Tibial artery (tissue), 4 donors: ENCODE measurements at regions of chr2 and their contacts with region 1.

Region 1: GRCh38 chr2:26745609-26746327 is 18.3 kb upstream of the SLC35F6 start:
- DNase-seq: peak; percentile 84 to 85
- H3K4me3 ChIP-seq: no peak overlapping the region
- H3K27ac ChIP-seq: no peak overlapping the region
- H3K4me1 ChIP-seq: no peaks in the 10 kb centered on the region
- H3K27me3 ChIP-seq: no peaks in the 10 kb centered on the region
- CTCF ChIP-seq: peak; percentile 92 to 96

Region 2: GRCh38 chr2:26606847-26607190 is 138.9 kb before region 1 on chr2:
- intact Hi-C with region 1: loop called (anchors 2 kb)
- DNase-seq: peak in 1 of 2 donors; percentile 33
- H3K4me3 ChIP-seq: no peak overlapping the region
- H3K27ac ChIP-seq: no peak overlapping the region
- H3K4me1 ChIP-seq: peaks cover 0 to 11% (median 0%) of the 10 kb centered on the region in 4 donors
- H3K27me3 ChIP-seq: no peaks in the 10 kb centered on the region
- CTCF ChIP-seq: no peak

Region 3: GRCh38 chr2:26685989-26686839 is 59.6 kb before region 1 on chr2:
- intact Hi-C with region 1: loop called (anchors 5 kb)
- DNase-seq: no peak
- H3K4me3 ChIP-seq: no peak overlapping the region
- H3K27ac ChIP-seq: no peak overlapping the region
- H3K4me1 ChIP-seq: peaks cover 0 to 22% (median 13%) of the 10 kb centered on the region in 4 donors
- H3K27me3 ChIP-seq: no peaks in the 10 kb centered on the region
- CTCF ChIP-seq: no peak

Region 4: GRCh38 chr2:26724004-26724750 is 21.6 kb before region 1 on chr2:
- intact Hi-C with region 1: no loop called
- DNase-seq: peak; percentile 70 to 94
- H3K4me3 ChIP-seq: no peak overlapping the region
- H3K27ac ChIP-seq: peak overlapping the region; percentile 83 to 88
- H3K4me1 ChIP-seq: peaks cover 0 to 64% (median 53%) of the 10 kb centered on the region in 4 donors
- H3K27me3 ChIP-seq: no peaks in the 10 kb centered on the region
- CTCF ChIP-seq: no peak